Esophagus muscularis mucosa (tissue), 4 donors: ENCODE measurements at regions of chr16 and their contacts with region 1.

Region 1: GRCh38 chr16:58699151-58699550 is 14.6 kb upstream of the SLC38A7 start:
- DNase-seq: no peak
- H3K4me3 ChIP-seq: no peak overlapping the region
- H3K27ac ChIP-seq: no peak overlapping the region
- H3K4me1 ChIP-seq: peaks cover 5 to 17% (median 10%) of the 10 kb centered on the region in 4 donors
- H3K27me3 ChIP-seq: no peaks in the 10 kb centered on the region
- CTCF ChIP-seq: no peak
- EP300 ChIP-seq: no peak
- POLR2A ChIP-seq: no peak

Region 2: GRCh38 chr16:58733671-58734458 is 34.7 kb after region 1 on chr16 and contains the start of gene GOT2:
- intact Hi-C with region 1: loop called (anchors 5 kb)
- DNase-seq: no peak
- H3K4me3 ChIP-seq: peak within 1 kb of the TSS; percentile 74 to 93 (median 90)
- H3K27ac ChIP-seq: peak within 1 kb of the TSS; percentile 87 to 91 (median 90)
- H3K4me1 ChIP-seq: peaks cover 40 to 53% (median 51%) of the 10 kb centered on the region in 4 donors
- H3K27me3 ChIP-seq: no peaks in the 10 kb centered on the region
- CTCF ChIP-seq: peak; percentile 80 to 88 (median 86)
- EP300 ChIP-seq: no peak
- POLR2A ChIP-seq: no peak
- total RNA-seq, gene GOT2: 64.1 to 108 (median 92.6) TPM

Region 3: GRCh38 chr16:59067205-59067604 is 368.1 kb after region 1 on chr16:
- intact Hi-C with region 1: no loop called
- DNase-seq: no peak
- H3K4me3 ChIP-seq: no peak overlapping the region
- H3K27ac ChIP-seq: no peak overlapping the region
- H3K4me1 ChIP-seq: no peaks in the 10 kb centered on the region
- H3K27me3 ChIP-seq: no peaks in the 10 kb centered on the region
- CTCF ChIP-seq: no peak
- EP300 ChIP-seq: no peak
- POLR2A ChIP-seq: no peak